ENCODE measurements at regions of chr4 and their contacts with region 1.

Region 1: DNA sequence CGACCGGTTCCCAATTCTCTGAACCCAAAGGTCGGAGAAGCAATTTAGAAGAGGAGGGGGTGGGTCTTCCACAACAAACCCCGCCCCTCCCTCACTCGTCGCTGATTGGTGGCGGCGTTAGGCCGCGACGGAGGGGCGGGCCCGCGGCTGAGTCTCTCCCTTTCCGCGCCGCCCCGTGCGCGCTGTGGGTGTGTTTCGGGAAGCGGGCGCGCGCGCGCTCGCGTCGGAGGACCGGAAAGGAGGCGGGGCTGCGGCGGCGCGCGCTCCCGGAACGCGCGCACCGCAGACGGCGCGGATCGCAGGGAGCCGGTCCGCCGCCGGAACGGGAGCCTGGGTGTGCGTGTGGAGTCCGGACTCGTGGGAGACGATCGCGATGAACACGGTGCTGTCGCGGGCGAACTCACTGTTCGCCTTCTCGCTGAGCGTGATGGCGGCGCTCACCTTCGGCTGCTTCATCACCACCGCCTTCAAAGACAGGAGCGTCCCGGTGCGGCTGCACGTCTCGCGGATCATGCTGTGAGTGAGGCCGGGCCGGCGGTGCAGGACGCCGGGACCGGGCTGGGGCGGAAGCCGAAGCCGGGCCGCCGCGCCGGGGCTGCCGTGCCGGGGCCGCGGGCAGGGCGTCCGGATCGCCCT is at the start of gene SPCS3:
- DNase-seq: peak; percentile 96
- ATAC-seq: peak; percentile 92
- H3K4me3 Mint-ChIP-seq: peak within 1 kb of the TSS; percentile 91
- H3K27ac Mint-ChIP-seq: peak within 1 kb of the TSS; percentile 96
- H3K4me1 Mint-ChIP-seq: peaks cover 47% of the 10 kb centered on the region
- H3K27me3 Mint-ChIP-seq: no peaks in the 10 kb centered on the region
- CTCF ChIP-seq: no peak
- total RNA-seq, gene SPCS3: 106 and 110 TPM in 2 replicates

Region 2: DNA sequence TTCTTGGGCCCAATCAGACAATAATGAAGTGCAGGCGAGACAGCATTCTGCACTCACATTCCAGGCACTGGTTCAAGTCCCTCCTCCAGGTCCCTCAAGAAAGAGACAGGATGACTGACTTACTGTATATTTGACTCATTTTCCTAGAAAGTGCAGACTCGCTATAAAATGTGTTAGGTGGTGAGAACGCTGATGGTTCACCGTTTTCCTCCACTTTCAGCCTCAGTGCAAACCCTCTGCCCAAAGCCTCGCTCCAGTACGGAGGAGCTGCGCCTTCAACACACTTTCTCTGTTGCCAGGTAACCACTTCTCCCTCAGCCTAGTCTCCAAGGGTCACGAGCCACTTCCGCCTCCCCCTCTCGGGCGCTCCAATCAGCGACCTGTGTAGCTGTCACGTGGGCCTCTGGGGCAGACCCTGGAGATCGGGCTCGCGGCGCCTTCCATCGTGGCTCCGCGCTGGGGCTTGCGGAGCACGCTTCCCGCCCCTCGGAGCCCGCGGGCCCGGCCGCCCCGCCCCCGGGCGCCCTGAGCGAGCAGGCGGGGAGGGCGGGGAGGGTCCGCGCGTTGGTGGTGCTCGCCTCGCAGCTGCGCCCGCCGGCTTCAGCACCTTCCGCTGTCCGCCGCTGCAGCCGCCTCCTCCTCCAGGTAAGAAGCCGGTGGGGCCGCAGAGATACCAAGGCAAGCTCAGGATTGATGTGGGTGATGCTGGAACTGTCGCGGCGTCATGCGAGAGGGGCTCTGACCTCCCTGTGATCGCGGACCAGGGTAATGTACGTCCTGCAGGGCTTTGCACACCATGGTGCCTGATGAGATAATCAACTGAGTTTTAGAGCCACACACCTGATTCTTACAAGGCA is 254.2 kb before region 1 on chr4 and contains the start of gene WDR17:
- CTCF ChIA-PET with region 1: no interaction called
- POLR2A ChIA-PET with region 1: no interaction called
- intact Hi-C with region 1: loop called (anchors 1 kb)
- DNase-seq: peak; percentile 79
- ATAC-seq: peak; percentile 97
- H3K4me3 Mint-ChIP-seq: peak within 1 kb of the TSS; percentile 90
- H3K27ac Mint-ChIP-seq: peak within 1 kb of the TSS; percentile 73
- H3K4me1 Mint-ChIP-seq: peaks cover 11% of the 10 kb centered on the region
- H3K27me3 Mint-ChIP-seq: peaks cover 3% of the 10 kb centered on the region
- CTCF ChIP-seq: no peak
- total RNA-seq, gene WDR17: 5.7 and 6.2 TPM in 2 replicates

Region 3: DNA sequence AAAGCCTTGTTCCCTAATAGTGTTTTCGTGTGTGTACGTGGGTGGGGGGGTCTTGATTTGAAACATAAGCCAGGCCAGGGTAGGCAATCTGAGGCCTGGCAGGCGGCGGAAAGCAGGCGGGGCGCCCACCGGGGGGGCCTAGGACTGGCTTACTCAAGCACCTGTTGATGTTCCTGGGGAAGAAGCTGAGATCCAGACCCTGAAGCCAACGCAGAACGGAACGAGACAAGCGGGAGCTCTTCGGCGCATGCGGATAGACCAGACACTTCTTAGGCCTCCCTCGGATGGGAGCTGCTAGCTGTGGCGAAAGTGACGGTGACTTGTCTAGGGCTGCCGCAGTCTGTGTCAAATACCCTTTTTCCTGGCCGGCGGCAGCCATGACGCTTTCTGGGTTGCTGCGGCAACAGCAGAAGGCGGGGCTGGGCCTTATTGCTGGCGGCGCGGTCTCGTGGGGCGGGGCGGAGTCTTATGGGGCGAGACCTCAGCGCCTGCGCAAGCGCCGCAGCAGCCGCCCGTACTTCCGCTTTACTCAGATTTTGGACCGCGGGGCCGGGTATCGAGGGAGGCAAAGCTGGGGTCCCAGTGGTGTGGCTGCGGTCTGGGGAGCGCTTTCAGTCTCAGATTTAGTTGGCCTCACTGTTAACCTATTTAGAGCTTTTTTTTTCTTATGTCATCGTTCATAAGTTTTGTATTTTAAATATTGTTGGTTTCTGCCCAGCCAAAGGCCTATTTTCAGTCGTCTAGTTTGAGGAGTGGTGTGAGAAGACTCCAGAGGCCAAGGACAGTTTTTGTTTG is 124.4 kb before region 1 on chr4 and contains the start of gene SPATA4:
- CTCF ChIA-PET with region 1: no interaction called
- POLR2A ChIA-PET with region 1: interaction called, 12 read pairs
- intact Hi-C with region 1: loop called (anchors 1 kb)
- DNase-seq: peak; percentile 94
- ATAC-seq: peak; percentile 97
- H3K4me3 Mint-ChIP-seq: peak within 1 kb of the TSS; percentile 87
- H3K27ac Mint-ChIP-seq: peak within 1 kb of the TSS; percentile 87
- H3K4me1 Mint-ChIP-seq: peaks cover 10% of the 10 kb centered on the region
- H3K27me3 Mint-ChIP-seq: peaks cover 41% of the 10 kb centered on the region
- CTCF ChIP-seq: no peak
- total RNA-seq, gene SPATA4: not detected in 2 replicates

Region 4: DNA sequence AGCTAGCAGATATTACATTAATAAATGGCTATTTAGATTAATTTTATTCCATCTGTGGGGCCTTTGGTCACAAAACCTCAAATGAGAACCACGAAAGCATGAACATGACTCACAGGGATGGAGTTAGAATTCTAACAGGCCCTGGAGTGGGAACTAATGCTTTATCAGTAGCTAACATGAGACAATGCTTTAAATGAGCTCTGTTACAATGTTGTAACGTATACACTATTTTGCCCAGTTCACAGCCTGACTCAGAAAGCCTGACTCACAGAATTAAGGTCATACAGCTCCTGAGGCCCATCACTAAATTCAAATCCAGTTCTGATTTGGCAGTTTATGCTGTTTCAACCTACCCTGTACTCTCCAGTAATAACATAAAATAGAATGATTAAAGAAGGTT is 449.7 kb after region 1 on chr4:
- CTCF ChIA-PET with region 1: no interaction called
- POLR2A ChIA-PET with region 1: no interaction called
- intact Hi-C with region 1: no loop called
- DNase-seq: no peak
- ATAC-seq: no peak
- H3K4me3 Mint-ChIP-seq: no peak overlapping the region
- H3K27ac Mint-ChIP-seq: no peak overlapping the region
- H3K4me1 Mint-ChIP-seq: no peaks in the 10 kb centered on the region
- H3K27me3 Mint-ChIP-seq: no peaks in the 10 kb centered on the region
- CTCF ChIP-seq: no peak

Region 5: DNA sequence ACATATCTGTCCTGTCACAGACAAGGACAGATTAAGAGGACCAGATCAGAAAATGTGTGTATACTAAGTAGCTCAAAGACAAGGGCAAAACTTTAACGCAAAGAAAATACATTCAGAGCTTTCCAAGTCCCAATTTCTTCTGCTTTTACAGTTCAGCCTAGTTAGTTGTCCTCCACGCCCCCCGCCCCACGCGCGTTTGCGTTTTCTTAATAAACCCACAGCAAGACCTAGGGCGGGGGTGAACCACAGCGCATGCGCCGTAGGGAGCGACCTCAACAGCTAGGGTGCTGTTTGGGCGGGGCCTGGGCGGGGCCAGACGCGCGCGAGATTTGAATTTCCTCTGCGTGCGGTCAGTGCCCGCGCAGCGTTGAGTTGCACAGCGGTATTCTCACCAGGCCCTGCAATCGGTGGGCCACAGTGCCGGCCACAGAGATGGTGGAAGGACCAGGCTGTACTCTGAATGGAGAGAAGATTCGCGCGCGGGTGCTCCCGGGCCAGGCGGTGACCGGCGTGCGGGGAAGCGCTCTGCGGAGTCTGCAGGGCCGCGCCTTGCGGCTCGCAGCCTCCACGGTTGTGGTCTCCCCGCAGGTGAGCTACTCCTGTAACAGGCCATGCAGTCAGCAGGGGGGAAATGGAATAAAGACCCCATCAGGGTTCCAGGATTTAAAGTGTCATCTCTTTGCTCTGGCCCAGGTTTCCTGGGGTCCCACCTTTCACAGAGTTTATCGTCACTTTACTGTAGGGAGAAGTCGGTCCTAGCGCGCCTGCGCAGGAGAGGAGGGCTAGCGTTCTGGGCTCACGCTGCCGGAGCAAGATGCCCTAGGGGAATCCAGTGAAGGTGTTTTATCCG is 989.9 kb after region 1 on chr4 and contains the start of gene NEIL3:
- CTCF ChIA-PET with region 1: no interaction called
- POLR2A ChIA-PET with region 1: no interaction called
- intact Hi-C with region 1: loop called (anchors 1 kb)
- DNase-seq: peak; percentile 84
- ATAC-seq: peak; percentile 96
- H3K4me3 Mint-ChIP-seq: peak within 1 kb of the TSS; percentile 94
- H3K27ac Mint-ChIP-seq: peak within 1 kb of the TSS; percentile 37
- H3K4me1 Mint-ChIP-seq: peaks cover 11% of the 10 kb centered on the region
- H3K27me3 Mint-ChIP-seq: no peaks in the 10 kb centered on the region
- CTCF ChIP-seq: no peak
- total RNA-seq, gene NEIL3: 0.15 and 0.35 TPM in 2 replicates

Measured in activated B cell treated with CpG ODN at 0.5 μM for 24 hours (primary cell).